GM10248 (cell line): ENCODE measurements at regions of chr9 and their contacts with region 1.

Region 1: GRCh38 chr9:36873247-36873875 is 160.7 kb downstream of the PAX5 start:
- DNase-seq: peak; percentile 84
- CTCF ChIP-seq: peak; percentile 93

Region 2: GRCh38 chr9:36849943-36850342 is 23.4 kb before region 1 on chr9:
- CTCF ChIA-PET with region 1: interaction called, 52 read pairs
- POLR2A ChIA-PET with region 1: interaction called, 3 read pairs
- DNase-seq: no peak
- CTCF ChIP-seq: no peak

Region 3: GRCh38 chr9:36862206-36863145 is 10.9 kb before region 1 on chr9:
- CTCF ChIA-PET with region 1: interaction called, 64 read pairs
- POLR2A ChIA-PET with region 1: no interaction called
- DNase-seq: no peak
- CTCF ChIP-seq: no peak

Region 4: DNA sequence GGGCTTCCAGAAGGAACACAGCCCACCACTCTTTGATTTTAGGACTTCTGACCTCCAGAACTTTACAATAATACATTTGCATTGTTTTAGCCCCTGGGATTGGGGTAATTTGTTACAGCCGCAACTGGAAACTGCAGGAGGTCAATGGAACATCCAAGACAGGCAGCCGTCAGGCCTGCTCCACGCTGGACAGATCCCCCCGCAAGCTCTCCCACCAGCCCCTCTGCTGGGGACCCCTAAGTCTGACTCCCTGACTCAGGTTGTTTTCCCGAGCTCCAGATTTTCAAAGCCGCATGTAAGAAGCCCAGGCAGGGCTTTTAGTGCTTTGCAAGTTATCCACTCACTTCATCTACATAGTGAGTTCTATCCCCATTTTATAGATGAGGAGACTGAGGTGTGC is 33.1 kb after region 1 on chr9:
- CTCF ChIA-PET with region 1: interaction called, 11 read pairs
- POLR2A ChIA-PET with region 1: no interaction called
- DNase-seq: no peak
- CTCF ChIP-seq: no peak

Region 5: GRCh38 chr9:36956908-36957307 is 83.5 kb after region 1 on chr9:
- CTCF ChIA-PET with region 1: interaction called, 18 read pairs
- POLR2A ChIA-PET with region 1: no interaction called
- DNase-seq: no peak
- CTCF ChIP-seq: no peak

Region 6: GRCh38 chr9:36995927-36996705 is 122.8 kb after region 1 on chr9:
- CTCF ChIA-PET with region 1: interaction called, 76 read pairs
- POLR2A ChIA-PET with region 1: no interaction called
- DNase-seq: peak; percentile 68
- CTCF ChIP-seq: peak; percentile 75

Region 7: GRCh38 chr9:37329576-37329975 is 456.2 kb after region 1 on chr9:
- CTCF ChIA-PET with region 1: interaction called, 25 read pairs
- POLR2A ChIA-PET with region 1: no interaction called
- DNase-seq: no peak
- CTCF ChIP-seq: peak; percentile 65